Heart left ventricle (tissue), 16 donors: ENCODE measurements at regions of chr7 and their contacts with region 1.

Region 1: GRCh38 chr7:139658908-139659675 is 118.7 kb downstream of the HIPK2 start:
- DNase-seq: no peak
- ATAC-seq: peak in 1 of 4 donors; percentile 14
- H3K4me3 ChIP-seq: no peak overlapping the region
- H3K27ac ChIP-seq: peak overlapping the region in 11 of 12 donors; percentile 23 to 83 (median 60)
- H3K4me1 ChIP-seq: peaks cover 23 to 98% (median 84%) of the 10 kb centered on the region in 12 donors
- H3K27me3 ChIP-seq: no peaks in the 10 kb centered on the region
- CTCF ChIP-seq: no peak
- POLR2A ChIP-seq: no peak

Region 2: GRCh38 chr7:139696552-139696951 is 37.5 kb after region 1 on chr7:
- intact Hi-C with region 1: loop called in 2 of 10 experiments (anchors 5 to 10 kb)
- DNase-seq: no peak
- ATAC-seq: peak in 3 of 4 donors; percentile 30 to 44 (median 40)
- H3K4me3 ChIP-seq: no peak overlapping the region
- H3K27ac ChIP-seq: peak overlapping the region in 1 of 12 donors; percentile 37
- H3K4me1 ChIP-seq: peaks cover under 1 to 58% (median 29%) of the 10 kb centered on the region in 12 donors
- H3K27me3 ChIP-seq: no peaks in the 10 kb centered on the region
- CTCF ChIP-seq: no peak
- POLR2A ChIP-seq: no peak

Region 3: DNA sequence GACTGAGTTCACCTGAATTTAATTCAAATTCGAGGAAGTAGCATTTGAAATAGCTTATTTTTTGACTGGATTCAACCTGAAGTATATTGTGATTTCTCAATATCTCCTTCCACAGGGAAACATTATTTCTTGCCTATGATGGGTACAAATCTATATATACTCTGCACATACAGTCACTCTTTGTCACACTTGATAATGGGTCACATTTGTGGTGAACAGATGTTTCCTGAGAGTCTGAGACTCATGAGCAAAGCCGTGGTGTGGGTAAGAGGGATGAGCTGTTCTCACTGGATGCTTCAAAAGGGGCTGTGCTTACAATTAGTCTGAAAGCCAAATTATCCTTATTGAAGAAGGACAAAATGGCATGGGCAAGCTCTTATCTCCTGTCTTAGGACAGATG is 152.0 kb after region 1 on chr7:
- intact Hi-C with region 1: no loop called
- DNase-seq: no peak
- ATAC-seq: no peak
- H3K4me3 ChIP-seq: no peak overlapping the region
- H3K27ac ChIP-seq: no peak overlapping the region
- H3K4me1 ChIP-seq: no peaks in the 10 kb centered on the region
- H3K27me3 ChIP-seq: no peaks in the 10 kb centered on the region
- CTCF ChIP-seq: no peak
- POLR2A ChIP-seq: no peak